Activated CD4-positive, alpha-beta T cell treated with anti-CD3 and anti-CD28 coated beads for 36 hours (primary cell): ENCODE measurements at regions of chr11 and their contacts with region 1.

Region 1: DNA sequence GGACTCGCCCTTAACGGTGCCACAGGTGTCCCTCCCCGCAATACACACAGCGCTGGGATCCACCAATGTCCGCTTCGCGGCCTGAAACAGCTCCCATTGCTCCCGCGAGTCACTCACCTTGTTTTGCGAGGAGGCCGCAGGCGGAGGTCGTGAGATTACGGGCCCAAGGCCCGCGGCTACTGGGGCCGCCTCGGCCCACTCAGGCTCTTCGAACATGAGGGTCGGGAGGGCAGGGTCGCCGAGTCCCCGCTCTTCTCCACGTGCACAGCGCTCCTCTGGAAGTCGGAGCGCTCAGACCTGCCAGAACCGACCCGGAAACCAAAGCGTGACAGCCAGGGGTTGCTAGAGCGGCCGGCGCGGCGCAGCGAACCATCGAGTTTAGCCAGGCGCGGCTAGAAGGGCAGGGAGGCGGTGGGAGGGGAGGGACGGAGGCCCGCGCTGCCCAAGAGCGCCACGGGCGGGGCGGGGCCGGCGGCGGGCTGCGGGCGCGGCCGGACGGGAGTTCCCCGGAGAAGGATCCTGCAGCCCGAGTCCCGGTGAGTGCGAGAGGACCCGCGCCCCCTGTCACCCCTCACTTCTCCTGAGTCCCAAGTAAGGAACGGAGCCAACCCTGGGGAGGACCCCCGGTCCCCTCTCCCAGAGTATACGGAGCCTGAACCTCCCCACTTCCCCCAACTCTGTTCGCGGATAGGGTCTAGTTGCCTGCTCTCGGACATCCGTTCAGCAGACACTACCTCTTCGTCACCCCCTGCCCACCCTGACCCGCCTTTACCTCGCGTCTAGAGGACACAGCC is at the starts of genes ILK and RRP8:
- DNase-seq: peak; percentile 93
- ATAC-seq: peak; percentile 70
- H3K4me3 Mint-ChIP-seq: no peak within 1 kb of the TSS
- H3K27ac Mint-ChIP-seq: no peak within 1 kb of the TSS
- H3K4me1 Mint-ChIP-seq: peaks cover 37% of the 10 kb centered on the region
- H3K27me3 Mint-ChIP-seq: no peaks in the 10 kb centered on the region
- total RNA-seq, gene ILK: 85.6 to 89.0 TPM
- total RNA-seq, gene RRP8: 34.4 to 35.0 TPM

Region 2: GRCh38 chr11:6419009-6419631 is 184.4 kb before region 1 on chr11 and contains the start of gene APBB1:
- CTCF ChIA-PET with region 1: no interaction called
- POLR2A ChIA-PET with region 1: no interaction called
- intact Hi-C with region 1: loop called in 1 of 2 experiments (anchors 10 kb)
- DNase-seq: peak; percentile 86
- ATAC-seq: peak; percentile 54
- H3K4me3 Mint-ChIP-seq: peak within 1 kb of the TSS; percentile 72
- H3K27ac Mint-ChIP-seq: peak within 1 kb of the TSS; percentile 73
- H3K4me1 Mint-ChIP-seq: peaks cover 7% of the 10 kb centered on the region
- H3K27me3 Mint-ChIP-seq: peaks cover 6% of the 10 kb centered on the region
- total RNA-seq, gene APBB1: 43.2 to 49.8 TPM

Region 3: DNA sequence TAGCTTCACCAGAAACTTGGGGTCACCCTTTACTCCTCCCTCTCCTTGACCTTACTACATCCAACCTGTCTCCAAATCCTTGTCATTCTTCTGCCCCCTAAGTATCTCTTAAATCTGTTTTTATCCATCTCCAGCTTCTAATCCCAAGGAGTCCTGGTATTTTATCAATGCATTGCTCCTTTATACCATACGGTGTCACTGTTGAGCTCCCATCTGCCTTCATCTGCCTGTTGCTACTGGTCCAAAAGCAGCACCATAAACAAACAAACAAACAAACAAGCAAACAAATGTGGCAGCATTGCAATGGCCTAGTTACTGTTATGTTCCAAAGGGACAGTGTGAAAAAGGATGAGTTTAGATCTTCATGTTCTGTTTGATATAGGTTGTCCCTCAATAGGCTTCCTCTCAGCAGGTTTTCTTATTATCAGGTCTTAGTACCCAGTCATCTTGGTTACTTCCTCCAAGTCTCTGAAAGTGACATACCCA is 72.2 kb before region 1 on chr11:
- CTCF ChIA-PET with region 1: interaction called, 6 read pairs
- POLR2A ChIA-PET with region 1: no interaction called
- intact Hi-C with region 1: loop called (anchors 1 to 2 kb)
- DNase-seq: peak; percentile 26
- ATAC-seq: peak; percentile 71
- H3K4me3 Mint-ChIP-seq: no peak overlapping the region
- H3K27ac Mint-ChIP-seq: no peak overlapping the region
- H3K4me1 Mint-ChIP-seq: peaks cover 11% of the 10 kb centered on the region
- H3K27me3 Mint-ChIP-seq: no peaks in the 10 kb centered on the region

Region 4: GRCh38 chr11:6667733-6668374 is 64.4 kb after region 1 on chr11:
- CTCF ChIA-PET with region 1: interaction called, 3 read pairs
- POLR2A ChIA-PET with region 1: no interaction called
- intact Hi-C with region 1: loop called in 1 of 2 experiments (anchors 1 kb)
- DNase-seq: peak; percentile 45
- ATAC-seq: peak; percentile 71
- H3K4me3 Mint-ChIP-seq: no peak overlapping the region
- H3K27ac Mint-ChIP-seq: no peak overlapping the region
- H3K4me1 Mint-ChIP-seq: peaks cover 51% of the 10 kb centered on the region
- H3K27me3 Mint-ChIP-seq: no peaks in the 10 kb centered on the region

Region 5: DNA sequence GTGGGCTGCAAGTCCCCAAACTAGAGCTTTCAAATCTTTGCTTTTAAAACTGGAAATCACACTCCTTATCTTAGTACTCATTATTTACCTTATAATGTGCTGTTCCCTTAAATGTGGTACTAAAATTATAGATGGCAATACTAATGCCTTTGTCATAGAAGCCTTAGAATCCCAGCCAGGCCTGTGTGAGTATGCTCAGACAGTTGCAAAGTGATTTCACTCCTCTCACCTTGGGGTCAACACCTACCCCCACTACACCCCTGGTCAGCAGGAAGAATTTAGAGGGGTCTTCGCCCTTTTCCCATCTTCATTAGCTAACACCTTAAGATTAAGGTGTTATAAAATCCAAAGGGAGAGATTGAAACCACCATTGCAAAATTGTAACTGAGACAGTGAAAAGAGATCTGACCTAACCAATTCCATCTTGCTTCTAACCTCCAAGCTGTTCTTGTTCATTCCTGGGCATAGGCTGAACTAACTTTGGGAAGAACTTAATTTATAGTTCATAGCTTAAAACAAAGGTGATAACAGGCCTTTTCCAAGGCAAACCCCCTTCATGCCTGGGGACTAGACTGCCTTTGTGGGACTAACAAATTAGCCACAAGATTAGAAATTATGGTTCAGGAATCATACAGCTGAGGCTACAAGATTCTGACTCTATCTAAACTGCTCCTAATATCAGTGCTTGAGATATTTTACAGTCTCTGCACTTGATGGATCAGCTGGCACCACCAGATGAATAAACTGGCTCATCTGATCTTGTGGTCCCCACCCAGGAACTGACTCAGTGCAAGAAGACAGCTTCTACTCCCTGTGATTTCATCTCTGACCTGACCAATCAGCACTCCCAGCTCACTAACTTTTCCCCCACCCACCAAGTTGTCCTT is 90.1 kb after region 1 on chr11:
- CTCF ChIA-PET with region 1: interaction called, 8 read pairs
- POLR2A ChIA-PET with region 1: no interaction called
- intact Hi-C with region 1: loop called in 1 of 2 experiments (anchors 2 kb)
- DNase-seq: peak; percentile 75
- ATAC-seq: peak; percentile 92
- H3K4me3 Mint-ChIP-seq: no peak overlapping the region
- H3K27ac Mint-ChIP-seq: peak overlapping the region; percentile 20
- H3K4me1 Mint-ChIP-seq: peaks cover 32% of the 10 kb centered on the region
- H3K27me3 Mint-ChIP-seq: no peaks in the 10 kb centered on the region

Region 6: GRCh38 chr11:6746086-6746618 is 142.7 kb after region 1 on chr11:
- CTCF ChIA-PET with region 1: no interaction called
- POLR2A ChIA-PET with region 1: no interaction called
- intact Hi-C with region 1: loop called (anchors 2 to 5 kb)
- DNase-seq: peak; percentile 58
- ATAC-seq: peak; percentile 85
- H3K4me3 Mint-ChIP-seq: no peak overlapping the region
- H3K27ac Mint-ChIP-seq: no peak overlapping the region
- H3K4me1 Mint-ChIP-seq: peaks cover 30% of the 10 kb centered on the region
- H3K27me3 Mint-ChIP-seq: no peaks in the 10 kb centered on the region

Region 7: DNA sequence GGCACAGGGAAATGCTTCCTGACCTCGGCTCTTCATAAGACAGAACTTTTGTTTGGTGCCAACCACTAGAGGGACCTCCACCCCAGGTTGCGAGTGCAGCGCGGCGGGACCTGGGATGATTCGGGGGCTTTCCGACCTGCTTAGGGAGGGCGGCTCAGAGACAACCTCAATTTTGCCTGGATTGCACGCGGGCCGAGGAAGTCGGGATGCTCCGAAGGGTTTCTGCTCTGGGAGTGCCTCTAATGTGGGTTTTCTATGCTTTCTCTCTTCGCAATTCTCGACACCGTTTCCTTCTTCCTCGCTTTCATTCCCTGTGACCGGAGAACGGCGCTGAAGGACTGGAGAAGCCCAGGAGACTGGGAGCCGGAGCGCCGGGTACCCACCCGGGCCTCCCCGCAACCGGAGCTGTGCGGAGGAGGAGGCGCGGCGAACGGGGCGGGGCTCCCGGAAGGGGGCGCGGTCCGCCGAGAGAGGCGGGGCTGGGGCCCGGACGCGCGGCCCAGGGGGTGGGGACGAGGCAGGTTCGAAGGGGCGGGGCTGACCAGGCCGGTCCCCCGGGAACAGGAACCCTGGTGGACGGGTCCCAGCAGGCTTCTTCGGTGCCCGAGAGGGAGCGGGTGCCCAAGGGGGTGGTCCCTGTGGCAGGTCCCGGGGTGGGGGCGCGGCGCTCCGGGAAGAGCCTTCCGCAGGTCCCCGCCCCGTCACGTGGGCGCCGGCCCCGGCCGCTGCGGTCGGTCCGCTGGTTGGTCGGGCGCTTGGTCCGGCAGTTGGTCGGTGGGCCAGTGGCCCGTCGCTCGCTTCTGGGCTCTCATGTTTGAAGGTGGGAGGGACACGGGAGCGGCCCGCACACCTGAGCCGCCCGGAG is 910.0 kb after region 1 on chr11 and contains the start of gene PPFIBP2:
- CTCF ChIA-PET with region 1: no interaction called
- POLR2A ChIA-PET with region 1: no interaction called
- intact Hi-C with region 1: loop called in 1 of 2 experiments (anchors 5 kb)
- DNase-seq: peak; percentile 89
- ATAC-seq: peak; percentile 89
- H3K4me3 Mint-ChIP-seq: peak within 1 kb of the TSS; percentile 86
- H3K27ac Mint-ChIP-seq: peak within 1 kb of the TSS; percentile 93
- H3K4me1 Mint-ChIP-seq: peaks cover 45% of the 10 kb centered on the region
- H3K27me3 Mint-ChIP-seq: peaks cover 2% of the 10 kb centered on the region
- total RNA-seq, gene PPFIBP2: 7.9 to 13.2 TPM